ENCODE measurements at regions of chr22 and their contacts with region 1.

Region 1: DNA sequence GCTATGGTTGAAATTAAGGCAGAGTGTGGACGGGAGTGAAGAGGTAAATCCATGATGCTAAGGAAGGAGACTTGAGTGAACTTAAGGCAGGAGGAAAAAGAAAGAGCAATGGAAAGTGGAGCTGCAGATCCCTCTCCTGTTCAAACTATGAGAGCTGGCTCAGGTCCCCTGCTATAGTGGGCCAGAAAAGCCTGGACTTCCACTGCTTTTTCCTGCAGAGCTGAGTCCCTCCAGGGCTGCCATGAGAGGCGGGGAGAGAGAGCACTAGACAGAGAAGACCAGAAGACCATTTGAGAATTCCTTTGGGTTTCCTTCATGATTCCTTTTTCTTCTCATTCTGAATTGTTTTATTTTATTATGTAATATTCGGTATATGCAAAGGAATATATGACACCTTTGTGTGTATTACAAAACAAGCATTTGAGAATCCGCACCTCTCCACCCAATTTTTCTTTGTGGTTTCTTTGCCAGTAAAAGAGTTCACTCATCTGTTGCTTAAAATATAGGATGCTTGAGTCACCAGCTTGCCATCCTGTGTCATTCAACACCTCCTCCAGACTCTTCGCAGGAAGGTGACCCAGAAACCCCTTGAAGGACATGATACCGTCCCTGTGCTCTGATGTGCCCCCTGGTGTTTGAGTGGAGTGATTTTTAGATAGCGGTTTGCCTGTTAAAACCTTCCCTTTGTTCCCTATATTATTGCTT is 24.4 kb downstream of the SREBF2 start:
- DNase-seq: peak; percentile 69
- ATAC-seq: peak; percentile 93
- H3K4me3 Mint-ChIP-seq: no peak overlapping the region
- H3K27ac Mint-ChIP-seq: peak overlapping the region; percentile 86
- H3K4me1 Mint-ChIP-seq: peaks cover 25% of the 10 kb centered on the region
- H3K27me3 Mint-ChIP-seq: no peaks in the 10 kb centered on the region
- CTCF ChIP-seq: peak; percentile 43; the same call in 1 of the 2 replicates

Region 2: DNA sequence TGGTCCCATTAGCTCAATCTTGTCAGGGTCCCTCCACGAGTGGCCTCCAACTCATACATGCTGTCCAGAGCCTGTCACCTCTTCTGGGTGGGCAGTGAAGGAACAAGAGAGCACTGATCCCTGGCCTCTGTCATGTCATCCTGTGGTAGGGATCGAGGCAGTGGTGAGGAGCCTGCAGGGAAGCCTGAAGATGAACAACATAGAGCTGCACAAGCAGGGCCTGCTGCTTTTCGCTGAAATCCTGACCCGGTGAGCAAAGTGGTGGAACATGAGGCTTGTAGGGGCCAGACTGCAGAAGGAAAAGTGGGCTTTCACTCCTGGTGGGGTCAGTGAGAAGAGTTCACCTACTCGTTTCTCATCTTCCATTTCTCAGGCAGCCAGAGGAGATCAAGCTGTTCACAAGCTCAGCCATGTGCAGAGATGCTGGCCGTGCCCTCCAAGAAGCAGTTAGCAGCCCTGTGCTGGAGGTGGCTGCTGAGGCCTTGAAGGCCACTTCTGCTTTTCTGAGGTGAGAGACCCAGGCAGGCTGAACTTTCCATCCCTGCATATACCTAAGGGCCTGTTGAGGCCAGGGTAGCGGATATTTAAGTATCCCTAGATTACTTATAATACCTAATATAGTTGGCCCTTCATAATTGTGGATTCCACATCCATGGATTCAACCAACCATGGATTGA is 125.1 kb before region 1 on chr22:
- CTCF ChIA-PET with region 1: no interaction called
- POLR2A ChIA-PET with region 1: no interaction called
- DNase-seq: no peak
- ATAC-seq: no peak
- H3K4me3 Mint-ChIP-seq: no peak overlapping the region
- H3K27ac Mint-ChIP-seq: no peak overlapping the region
- H3K4me1 Mint-ChIP-seq: no peaks in the 10 kb centered on the region
- H3K27me3 Mint-ChIP-seq: no peaks in the 10 kb centered on the region; the same call in 1 of the 2 replicates
- CTCF ChIP-seq: no peak

Region 3: DNA sequence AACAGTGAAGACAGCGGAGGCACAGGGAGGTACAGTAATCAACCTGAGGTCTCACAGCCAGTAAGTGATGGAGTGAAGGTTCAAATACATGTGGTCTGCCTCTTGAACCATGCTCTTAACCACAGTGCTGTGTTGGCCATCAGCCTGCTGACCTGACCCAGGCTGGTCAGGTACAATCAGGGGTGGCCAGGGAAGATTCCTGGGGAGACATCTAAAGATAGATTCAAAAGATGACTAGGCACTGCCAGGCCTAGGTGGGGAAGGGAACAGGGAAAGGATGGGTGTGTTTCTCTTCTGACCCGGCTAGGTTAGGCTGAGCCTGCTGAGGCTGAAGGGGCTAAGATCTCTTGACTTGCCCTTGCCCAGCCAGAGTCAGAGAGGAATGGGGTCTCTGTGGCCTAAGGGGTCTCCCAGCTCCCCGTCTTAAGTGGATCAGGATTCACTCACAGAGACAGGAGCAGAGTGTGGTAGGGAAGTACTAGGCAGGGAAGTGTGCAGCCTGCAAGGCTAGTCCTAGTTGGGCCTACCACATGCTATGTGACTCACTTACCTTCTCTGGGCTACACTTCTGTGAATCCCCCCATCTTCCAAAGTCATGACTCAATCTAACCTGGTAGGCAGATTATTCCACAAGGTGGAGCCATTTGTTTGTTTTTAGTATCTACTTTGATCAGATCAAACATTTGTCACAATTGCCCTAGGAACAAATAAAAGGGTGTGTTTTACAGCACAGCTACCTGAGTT is 34.8 kb before region 1 on chr22:
- CTCF ChIA-PET with region 1: interaction called, 11 read pairs
- POLR2A ChIA-PET with region 1: no interaction called
- DNase-seq: no peak
- ATAC-seq: peak; percentile 54
- H3K4me3 Mint-ChIP-seq: no peak overlapping the region
- H3K27ac Mint-ChIP-seq: peak overlapping the region; percentile 32; the same call in 1 of the 2 replicates
- H3K4me1 Mint-ChIP-seq: peaks cover 35% of the 10 kb centered on the region
- H3K27me3 Mint-ChIP-seq: no peaks in the 10 kb centered on the region; the same call in 1 of the 2 replicates
- CTCF ChIP-seq: no peak

Region 4: DNA sequence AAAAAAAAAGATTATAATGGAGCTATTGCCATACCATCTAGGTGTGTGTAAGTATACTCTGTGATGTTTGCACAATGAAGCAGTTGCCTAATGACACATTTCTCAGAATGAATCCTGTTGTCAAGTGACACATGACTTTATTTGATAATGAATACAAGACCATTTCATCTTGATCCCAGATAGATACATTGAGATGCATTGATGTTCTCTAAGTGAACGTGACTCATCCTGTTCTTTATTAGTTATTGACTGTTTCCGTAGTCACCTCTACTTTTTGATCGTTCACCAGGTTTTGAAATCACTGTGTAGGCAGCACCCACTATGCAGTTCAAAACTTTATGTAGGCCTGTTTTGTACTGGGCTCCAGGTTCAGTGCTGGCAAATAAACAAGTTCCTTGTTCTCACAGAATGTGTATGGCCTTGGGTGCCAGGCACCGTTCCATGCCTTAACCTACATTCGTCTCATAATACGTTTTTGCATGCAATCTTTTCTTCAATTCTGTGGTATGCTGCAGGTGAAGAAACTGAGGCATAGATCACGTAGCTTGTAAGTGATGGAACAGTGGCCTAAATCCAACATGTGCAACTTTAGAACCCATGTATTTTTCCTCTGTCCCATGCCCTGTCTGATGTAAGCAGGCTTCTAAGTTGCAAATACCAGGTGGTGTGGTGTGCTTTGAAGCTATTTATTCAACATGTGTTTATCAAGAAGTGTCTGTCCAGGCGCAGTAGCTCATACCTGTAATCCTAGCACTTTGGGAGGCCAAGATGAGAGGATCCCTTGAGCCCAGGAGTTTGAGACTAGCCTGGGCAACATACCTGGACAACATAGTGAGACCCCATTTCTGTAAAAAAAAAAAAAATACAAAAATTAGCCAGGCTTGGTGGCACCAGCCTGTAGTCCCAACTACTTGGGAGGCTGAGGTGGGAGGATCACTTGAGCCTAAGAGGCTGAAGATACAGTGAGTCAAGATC is 14.0 kb before region 1 on chr22:
- CTCF ChIA-PET with region 1: interaction called, 36 read pairs
- POLR2A ChIA-PET with region 1: no interaction called
- DNase-seq: no peak
- ATAC-seq: no peak
- H3K4me3 Mint-ChIP-seq: no peak overlapping the region
- H3K27ac Mint-ChIP-seq: peak overlapping the region; percentile 17; the same call in 1 of the 2 replicates
- H3K4me1 Mint-ChIP-seq: peaks cover 65% of the 10 kb centered on the region
- H3K27me3 Mint-ChIP-seq: no peaks in the 10 kb centered on the region
- CTCF ChIP-seq: no peak

Region 5: DNA sequence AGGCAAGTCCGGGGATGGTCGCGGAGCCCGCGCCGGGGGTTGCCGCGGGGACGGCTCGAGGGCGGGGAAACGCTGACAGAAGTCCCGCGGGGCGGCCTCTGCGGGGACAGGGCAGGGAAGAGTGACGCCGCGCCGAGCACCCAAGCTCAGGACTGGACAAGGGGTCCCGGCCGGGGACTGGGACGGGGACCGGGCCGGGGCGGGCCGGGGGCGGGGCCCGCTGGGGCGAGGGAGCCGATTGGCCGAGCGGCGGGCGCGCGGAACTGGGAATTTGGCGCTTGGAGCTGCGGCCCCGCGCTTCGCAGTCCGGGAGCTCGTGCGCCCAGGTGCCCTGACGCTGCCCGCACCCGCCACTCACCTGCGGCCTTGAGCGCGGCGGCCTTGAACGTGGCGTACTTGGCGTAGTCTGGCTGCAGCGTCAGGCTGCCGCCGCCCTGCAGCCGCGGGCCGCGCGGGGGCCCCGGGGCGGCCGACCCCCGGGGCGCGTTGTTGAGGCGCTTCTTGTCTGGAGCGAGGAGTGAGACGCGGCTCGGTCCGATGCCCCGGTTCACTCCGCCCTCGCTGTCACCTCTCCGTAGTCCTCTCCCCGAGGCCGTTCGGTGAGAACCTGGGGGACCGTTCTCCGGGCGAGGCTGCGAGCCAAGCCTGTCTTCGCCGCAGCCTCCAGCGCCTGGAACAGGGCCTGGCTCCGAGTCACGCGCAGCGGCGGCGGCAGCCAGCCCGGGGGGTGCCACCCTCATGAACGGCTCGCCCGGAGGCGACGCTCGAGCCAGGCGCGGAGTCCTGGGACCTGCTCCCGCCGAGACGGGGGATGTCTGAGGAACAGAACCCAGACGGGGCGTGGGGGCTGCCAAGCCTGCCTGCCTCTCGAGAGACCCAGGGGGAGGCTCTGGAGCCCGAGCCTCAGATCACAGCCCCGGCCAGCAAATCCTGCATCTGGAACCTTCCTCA is 53.0 kb after region 1 on chr22:
- CTCF ChIA-PET with region 1: no interaction called
- POLR2A ChIA-PET with region 1: no interaction called
- DNase-seq: peak; percentile 69
- ATAC-seq: peak; percentile 27
- H3K4me3 Mint-ChIP-seq: no peak overlapping the region
- H3K27ac Mint-ChIP-seq: no peak overlapping the region
- H3K4me1 Mint-ChIP-seq: peaks cover 17% of the 10 kb centered on the region
- H3K27me3 Mint-ChIP-seq: peaks cover 57% of the 10 kb centered on the region
- CTCF ChIP-seq: no peak

Measured in WTC11 (cell line).